ENCODE measurements at regions of chr11 and their contacts with region 1.

Region 1: GRCh38 chr11:14422052-14422813 is 63.2 kb upstream of the RRAS2 start:
- DNase-seq: peak; percentile 89 to 94
- ATAC-seq: peak; percentile 92
- H3K4me3 ChIP-seq: no peak overlapping the region
- H3K27ac ChIP-seq: peak overlapping the region in 1 of 2 donors; percentile 41
- H3K4me1 ChIP-seq: peaks cover 1 to 6% of the 10 kb centered on the region in 2 donors
- H3K27me3 ChIP-seq: no peaks in the 10 kb centered on the region

Region 2: DNA sequence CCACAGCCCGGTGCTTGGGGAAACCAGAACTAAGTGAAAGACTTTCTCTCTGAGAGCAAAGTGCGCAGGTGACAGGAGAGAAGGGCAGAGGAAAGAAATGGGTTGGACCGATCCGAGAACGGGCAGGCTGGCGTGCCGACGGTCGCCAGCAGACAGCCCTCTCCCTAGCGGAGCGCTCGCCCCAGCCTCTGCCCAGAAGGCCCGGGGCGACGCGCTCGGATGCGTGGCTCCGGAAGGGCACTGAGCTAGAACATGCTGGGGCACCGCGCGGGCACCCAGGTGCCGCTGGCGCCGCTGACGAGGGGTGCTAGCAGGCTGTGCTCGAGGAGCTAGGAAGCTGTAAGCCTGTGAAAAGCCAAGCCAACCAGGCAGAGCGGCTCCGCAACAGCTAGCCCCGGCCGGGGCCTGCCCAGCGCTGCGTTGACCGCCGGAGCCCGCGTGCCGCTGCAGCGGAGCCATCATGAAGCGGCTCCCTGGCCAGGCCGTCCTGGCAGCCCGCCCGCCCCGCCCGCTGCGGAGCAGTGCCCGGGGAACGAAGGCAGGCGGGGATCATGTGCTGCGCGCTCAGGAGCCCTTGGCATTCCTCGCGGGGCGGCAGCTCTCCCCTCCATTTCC is 41.2 kb before region 1 on chr11:
- intact Hi-C with region 1: loop called in 1 of 2 experiments (anchors 5 kb)
- DNase-seq: peak; percentile 80 to 93
- ATAC-seq: peak; percentile 88
- H3K4me3 ChIP-seq: peak overlapping the region; percentile 45 to 78
- H3K27ac ChIP-seq: peak overlapping the region; percentile 59 to 83
- H3K4me1 ChIP-seq: peaks cover 6 to 8% of the 10 kb centered on the region in 2 donors
- H3K27me3 ChIP-seq: no peaks in the 10 kb centered on the region

Measured in aorta (tissue), 5 donors.